ENCODE measurements at regions of chr17 and their contacts with region 1.

Region 1: DNA sequence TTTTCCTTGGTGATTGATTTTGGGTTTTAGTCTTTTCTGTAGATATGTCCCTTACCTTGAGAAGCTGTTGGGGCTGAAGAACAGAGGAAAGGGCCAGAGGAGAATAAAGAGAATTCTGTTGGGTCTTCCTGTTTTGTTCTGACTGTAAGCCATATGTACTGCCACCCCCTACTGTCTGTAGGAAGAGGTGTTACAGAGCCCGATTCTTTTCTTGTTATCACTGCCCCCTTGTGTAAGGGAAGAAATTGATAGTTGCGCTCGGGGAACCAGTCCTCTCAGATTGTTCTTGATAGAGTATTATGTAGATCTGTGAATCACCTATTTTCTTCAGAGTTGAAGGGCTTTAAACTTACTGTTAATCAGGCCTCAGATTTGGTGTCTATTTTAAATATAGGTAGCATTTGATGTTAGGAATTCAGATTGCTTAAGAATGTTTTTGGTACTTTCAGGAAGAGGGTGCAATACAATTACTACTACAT is 2.4 kb downstream of the TANC2 start:
- DNase-seq: peak in 8 of 9 experiments; percentile 6 to 87 (median 54)
- ATAC-seq: peak; percentile 39
- H3K4me3 ChIP-seq: no peak overlapping the region
- H3K4me3 Mint-ChIP-seq: peak overlapping the region; percentile 40
- H3K27ac ChIP-seq: no peak overlapping the region
- H3K27ac Mint-ChIP-seq: peak overlapping the region; percentile 3
- H3K4me1 ChIP-seq: peaks cover 23% of the 10 kb centered on the region
- H3K4me1 Mint-ChIP-seq: peaks cover 36% of the 10 kb centered on the region
- H3K27me3 ChIP-seq: no peaks in the 10 kb centered on the region
- H3K27me3 Mint-ChIP-seq: no peaks in the 10 kb centered on the region
- CTCF ChIP-seq: peak; percentile 93

Region 2: DNA sequence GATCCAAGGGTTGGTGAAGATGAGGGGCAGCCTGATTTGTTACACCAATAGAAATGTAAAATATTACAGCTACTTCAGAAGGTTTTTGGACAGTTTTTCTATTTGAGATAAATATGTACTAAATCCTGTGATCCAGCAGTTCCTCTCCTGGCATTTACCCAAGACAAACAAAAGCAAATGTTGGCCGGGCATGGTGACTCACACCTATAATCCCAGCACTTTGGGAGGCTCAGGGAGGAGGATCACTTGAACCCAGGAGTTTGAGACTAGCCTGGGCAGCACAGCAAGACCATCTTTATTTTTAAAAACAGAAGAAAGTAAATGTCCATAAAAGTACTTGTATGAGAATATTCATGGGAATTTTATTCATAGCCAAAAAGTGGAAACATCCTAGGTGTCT is 405.8 kb before region 1 on chr17:
- CTCF ChIA-PET with region 1: interaction called, 3 read pairs
- POLR2A ChIA-PET with region 1: no interaction called
- intact Hi-C with region 1: loop called in 1 of 2 experiments (anchors 10 kb)
- DNase-seq: no peak
- ATAC-seq: no peak
- H3K4me3 ChIP-seq: no peak overlapping the region
- H3K4me3 Mint-ChIP-seq: no peak overlapping the region
- H3K27ac ChIP-seq: no peak overlapping the region
- H3K27ac Mint-ChIP-seq: no peak overlapping the region
- H3K4me1 ChIP-seq: no peaks in the 10 kb centered on the region
- H3K4me1 Mint-ChIP-seq: peaks cover 7% of the 10 kb centered on the region
- H3K27me3 ChIP-seq: no peaks in the 10 kb centered on the region
- H3K27me3 Mint-ChIP-seq: no peaks in the 10 kb centered on the region
- CTCF ChIP-seq: no peak

Region 3: GRCh38 chr17:62703775-62704378 is 264.6 kb before region 1 on chr17:
- CTCF ChIA-PET with region 1: interaction called, 10 read pairs
- POLR2A ChIA-PET with region 1: no interaction called
- intact Hi-C with region 1: loop called (anchors 1 kb)
- DNase-seq: peak; percentile 34 to 88 (median 71)
- ATAC-seq: peak; percentile 91
- H3K4me3 ChIP-seq: peak overlapping the region; percentile 49
- H3K4me3 Mint-ChIP-seq: peak overlapping the region; percentile 63
- H3K27ac ChIP-seq: no peak overlapping the region
- H3K27ac Mint-ChIP-seq: no peak overlapping the region
- H3K4me1 ChIP-seq: peaks cover 5% of the 10 kb centered on the region
- H3K4me1 Mint-ChIP-seq: peaks cover 7% of the 10 kb centered on the region
- H3K27me3 ChIP-seq: peaks cover 0 to 2% of the 10 kb centered on the region in 2 experiments
- H3K27me3 Mint-ChIP-seq: peaks cover 3% of the 10 kb centered on the region
- CTCF ChIP-seq: peak; percentile 76

Region 4: DNA sequence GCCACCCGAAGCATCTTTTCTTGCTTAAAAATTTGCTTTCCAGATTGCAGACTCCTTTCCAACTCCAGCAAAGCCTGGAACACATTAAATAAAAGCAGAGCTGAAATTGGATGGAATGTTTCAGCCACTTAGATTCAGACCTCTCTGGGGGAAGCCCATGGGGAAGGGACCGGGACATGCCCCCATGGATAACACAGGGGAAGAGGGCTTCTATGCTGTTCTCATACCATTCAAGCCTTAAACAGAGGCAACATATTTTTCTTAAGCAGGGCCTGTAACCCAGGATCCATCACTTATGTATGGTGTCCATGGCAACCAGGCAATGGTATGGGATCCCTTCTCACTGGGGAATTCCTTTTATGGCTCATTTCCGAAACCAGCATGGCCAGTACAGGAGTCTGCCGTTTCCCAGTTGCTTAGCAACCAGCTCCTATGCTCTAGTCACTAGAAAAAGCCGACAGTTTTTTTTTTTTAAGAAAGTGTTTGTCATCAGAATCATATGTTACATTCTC is 98.4 kb before region 1 on chr17:
- CTCF ChIA-PET with region 1: no interaction called
- POLR2A ChIA-PET with region 1: no interaction called
- intact Hi-C with region 1: loop called in 1 of 2 experiments (anchors 5 kb)
- DNase-seq: no peak
- ATAC-seq: no peak
- H3K4me3 ChIP-seq: no peak overlapping the region
- H3K4me3 Mint-ChIP-seq: no peak overlapping the region
- H3K27ac ChIP-seq: no peak overlapping the region
- H3K27ac Mint-ChIP-seq: no peak overlapping the region
- H3K4me1 ChIP-seq: no peaks in the 10 kb centered on the region
- H3K4me1 Mint-ChIP-seq: no peaks in the 10 kb centered on the region
- H3K27me3 ChIP-seq: no peaks in the 10 kb centered on the region
- H3K27me3 Mint-ChIP-seq: peaks cover 23% of the 10 kb centered on the region
- CTCF ChIP-seq: no peak

Region 5: DNA sequence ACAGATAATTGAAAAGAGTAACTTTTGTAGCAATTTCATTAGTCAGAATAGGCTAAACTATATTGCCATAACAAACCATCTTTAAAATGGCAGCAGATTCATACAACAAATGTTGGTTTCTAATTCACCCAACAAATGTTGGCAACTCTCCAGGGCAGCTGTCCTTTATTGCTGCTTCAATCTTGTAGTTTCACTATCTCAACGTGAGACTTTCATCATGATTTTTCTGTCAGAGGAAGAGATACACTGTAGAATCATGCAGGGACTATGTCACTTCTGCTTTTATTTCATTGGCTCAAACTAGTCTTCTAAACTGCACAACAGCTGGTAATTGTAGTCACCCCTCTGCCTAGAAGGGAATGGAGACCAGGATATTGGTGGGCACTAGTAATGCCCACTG is 171.8 kb after region 1 on chr17:
- CTCF ChIA-PET with region 1: no interaction called
- POLR2A ChIA-PET with region 1: no interaction called
- intact Hi-C with region 1: no loop called
- DNase-seq: peak in 1 of 9 experiments; percentile 16
- ATAC-seq: no peak
- H3K4me3 ChIP-seq: no peak overlapping the region
- H3K4me3 Mint-ChIP-seq: no peak overlapping the region
- H3K27ac ChIP-seq: no peak overlapping the region
- H3K27ac Mint-ChIP-seq: no peak overlapping the region
- H3K4me1 ChIP-seq: no peaks in the 10 kb centered on the region
- H3K4me1 Mint-ChIP-seq: no peaks in the 10 kb centered on the region
- H3K27me3 ChIP-seq: no peaks in the 10 kb centered on the region
- H3K27me3 Mint-ChIP-seq: no peaks in the 10 kb centered on the region
- CTCF ChIP-seq: no peak

Region 6: DNA sequence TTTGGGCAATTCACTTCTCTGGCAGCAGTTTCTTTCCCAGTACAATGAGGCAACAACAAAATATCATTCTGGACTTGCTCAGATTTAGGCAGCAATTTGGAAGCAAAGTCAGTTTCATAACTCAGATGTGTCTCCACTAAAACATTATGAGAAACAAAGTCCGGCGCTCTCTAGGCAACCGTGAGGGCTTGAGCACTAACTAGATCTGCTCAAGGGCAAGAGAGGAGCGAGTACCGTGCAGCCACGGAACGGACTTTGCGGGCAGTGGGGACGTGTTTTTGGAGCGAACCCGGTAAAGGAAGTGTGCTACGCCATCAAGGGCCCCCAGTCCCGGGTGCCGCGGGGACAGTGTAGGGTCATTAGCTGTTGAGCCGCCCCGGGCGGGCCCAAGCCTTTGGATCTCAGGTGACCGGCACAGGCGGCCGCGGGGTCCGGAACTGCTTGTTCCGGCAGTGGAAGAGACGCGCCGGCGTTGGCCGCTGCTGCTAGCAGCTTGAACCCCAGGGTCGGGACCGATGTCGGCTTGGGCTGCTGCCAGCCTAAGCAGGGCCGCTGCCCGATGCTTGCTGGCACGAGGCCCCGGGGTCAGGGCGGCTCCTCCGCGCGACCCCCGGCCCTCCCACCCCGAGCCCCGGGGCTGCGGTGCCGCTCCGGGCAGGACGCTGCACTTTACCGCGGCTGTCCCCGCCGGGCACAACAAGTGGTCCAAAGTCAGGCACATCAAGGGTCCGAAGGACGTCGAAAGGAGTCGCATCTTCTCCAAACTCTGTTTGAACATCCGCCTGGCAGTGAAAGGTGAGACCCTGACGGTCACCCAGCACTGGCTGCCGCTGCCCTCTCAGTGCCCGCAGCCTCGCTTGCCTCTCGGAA is 632.3 kb after region 1 on chr17 and contains the start of gene TACO1:
- CTCF ChIA-PET with region 1: no interaction called
- POLR2A ChIA-PET with region 1: no interaction called
- intact Hi-C with region 1: loop called in 1 of 2 experiments (anchors 5 kb)
- DNase-seq: peak; percentile 62 to 87 (median 76)
- ATAC-seq: peak; percentile 82
- H3K4me3 ChIP-seq: peak within 1 kb of the TSS; percentile 69 to 99
- H3K4me3 Mint-ChIP-seq: peak within 1 kb of the TSS; percentile 96
- H3K27ac ChIP-seq: peak within 1 kb of the TSS; percentile 64 to 80
- H3K27ac Mint-ChIP-seq: peak within 1 kb of the TSS; percentile 95
- H3K4me1 ChIP-seq: peaks cover 22% of the 10 kb centered on the region
- H3K4me1 Mint-ChIP-seq: peaks cover 49% of the 10 kb centered on the region
- H3K27me3 ChIP-seq: no peaks in the 10 kb centered on the region
- H3K27me3 Mint-ChIP-seq: no peaks in the 10 kb centered on the region
- CTCF ChIP-seq: no peak
- total RNA-seq, gene TACO1: 13.7 to 15.9 TPM

Measured in CD8-positive, alpha-beta T cell (primary cell).